Heart right ventricle (tissue), 16 donors: ENCODE measurements at regions of chr19 and their contacts with region 1.

Region 1: GRCh38 chr19:49832556-49832955 is 14.5 kb downstream of the MED25 start:
- DNase-seq: no peak
- ATAC-seq: no peak
- H3K4me3 ChIP-seq: no peak overlapping the region
- H3K27ac ChIP-seq: peak overlapping the region in 1 of 10 donors; percentile 60
- H3K4me1 ChIP-seq: peaks cover 0 to 18% (median 0%) of the 10 kb centered on the region in 9 donors
- H3K27me3 ChIP-seq: no peaks in the 10 kb centered on the region
- CTCF ChIP-seq: no peak

Region 2: DNA sequence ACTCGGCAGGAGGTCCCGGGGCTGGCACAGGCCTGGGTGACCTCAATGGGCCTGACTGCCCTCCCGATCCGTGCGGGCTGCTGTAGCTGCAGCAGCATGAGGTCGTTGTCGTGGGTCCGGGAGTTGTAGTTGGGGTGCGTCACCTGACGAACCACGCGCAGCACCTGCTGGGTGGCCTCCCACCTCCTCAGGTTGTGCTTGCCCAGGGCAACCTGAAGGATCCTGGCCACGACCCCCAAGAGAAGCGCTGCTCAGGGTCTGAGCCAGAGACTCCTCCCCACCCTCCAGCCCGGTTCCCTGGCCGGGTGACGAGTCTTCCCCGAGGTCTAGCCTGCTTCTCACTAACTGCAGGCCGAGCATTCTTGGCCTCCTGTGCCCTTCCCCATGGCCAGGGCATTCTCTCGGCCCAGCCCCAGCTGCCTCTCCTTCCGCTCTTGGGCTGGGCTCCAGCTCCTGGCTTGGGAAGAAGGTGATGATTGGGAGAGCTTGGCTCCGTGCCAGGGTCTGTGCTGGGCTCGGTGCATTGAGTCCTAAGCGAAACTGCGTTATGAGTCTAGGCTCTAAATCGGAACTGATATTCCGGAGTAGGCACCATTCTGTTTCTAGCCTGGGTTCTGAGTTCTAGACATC is 1247.0 kb after region 1 on chr19:
- intact Hi-C with region 1: loop called in 1 of 10 experiments (anchors 10 kb)
- DNase-seq: peak; percentile 57 to 77
- ATAC-seq: peak; percentile 57 to 91 (median 82)
- H3K4me3 ChIP-seq: no peak overlapping the region
- H3K27ac ChIP-seq: peak overlapping the region in 1 of 10 donors; percentile 45
- H3K4me1 ChIP-seq: peaks cover 0 to 7% (median 3%) of the 10 kb centered on the region in 9 donors
- H3K27me3 ChIP-seq: peaks cover 0 to 7% (median 0%) of the 10 kb centered on the region in 7 donors
- CTCF ChIP-seq: no peak